A673 (cell line): ENCODE measurements at regions of chr14 and their contacts with region 1.

Region 1: GRCh38 chr14:27995691-27996090 is 770.9 kb upstream of the FOXG1 start:
- DNase-seq: no peak
- H3K4me3 ChIP-seq: no peak overlapping the region
- H3K27ac ChIP-seq: no peak overlapping the region
- H3K4me1 ChIP-seq: no peaks in the 10 kb centered on the region
- H3K27me3 ChIP-seq: no peaks in the 10 kb centered on the region
- CTCF ChIP-seq: no peak

Region 2: GRCh38 chr14:28057359-28058296 is 61.9 kb after region 1 on chr14:
- CTCF ChIA-PET with region 1: no interaction called
- POLR2A ChIA-PET with region 1: no interaction called
- intact Hi-C with region 1: loop called (anchors 10 kb)
- DNase-seq: no peak
- H3K4me3 ChIP-seq: no peak overlapping the region
- H3K27ac ChIP-seq: no peak overlapping the region
- H3K4me1 ChIP-seq: no peaks in the 10 kb centered on the region
- H3K27me3 ChIP-seq: no peaks in the 10 kb centered on the region
- CTCF ChIP-seq: no peak

Region 3: DNA sequence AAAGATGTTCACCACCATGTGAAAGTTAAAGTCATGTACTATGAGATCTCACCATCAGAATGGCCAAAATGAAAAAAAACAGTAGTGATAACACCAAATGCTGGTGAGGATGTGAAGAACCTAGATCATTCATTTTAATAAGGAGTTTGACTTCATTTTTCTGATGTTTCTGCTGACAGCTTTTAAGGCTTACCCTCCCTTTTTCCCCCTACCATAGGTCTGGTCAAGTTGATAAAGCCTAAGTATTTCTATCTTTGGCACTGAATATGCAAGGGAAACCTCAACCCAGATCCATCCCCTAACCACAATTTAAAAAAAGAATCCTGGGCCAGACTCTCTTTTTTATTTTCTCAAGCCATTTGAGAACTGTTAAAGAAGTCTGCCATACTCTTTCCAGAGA is 81.3 kb after region 1 on chr14:
- CTCF ChIA-PET with region 1: no interaction called
- POLR2A ChIA-PET with region 1: no interaction called
- intact Hi-C with region 1: no loop called
- DNase-seq: no peak
- H3K4me3 ChIP-seq: no peak overlapping the region
- H3K27ac ChIP-seq: no peak overlapping the region
- H3K4me1 ChIP-seq: no peaks in the 10 kb centered on the region
- H3K27me3 ChIP-seq: no peaks in the 10 kb centered on the region
- CTCF ChIP-seq: no peak

Region 4: GRCh38 chr14:28731358-28731757 is 735.7 kb after region 1 on chr14:
- CTCF ChIA-PET with region 1: no interaction called
- POLR2A ChIA-PET with region 1: no interaction called
- intact Hi-C with region 1: no loop called
- DNase-seq: no peak
- H3K4me3 ChIP-seq: no peak overlapping the region
- H3K27ac ChIP-seq: no peak overlapping the region
- H3K4me1 ChIP-seq: no peaks in the 10 kb centered on the region
- H3K27me3 ChIP-seq: peaks cover 31% of the 10 kb centered on the region
- CTCF ChIP-seq: no peak